Prostate gland (tissue), 2 donors: ENCODE measurements at regions of chr13 and their contacts with region 1.

Region 1: GRCh38 chr13:46492946-46493345 is 60.0 kb upstream of the LRCH1 start:
- DNase-seq: peak; percentile 46
- H3K4me3 ChIP-seq: no peak overlapping the region
- H3K27ac ChIP-seq: no peak overlapping the region
- H3K4me1 ChIP-seq: no peaks in the 10 kb centered on the region
- H3K27me3 ChIP-seq: no peaks in the 10 kb centered on the region
- CTCF ChIP-seq: peak in 3 of 4 experiments; percentile 58 to 74 (median 73)
- POLR2A ChIP-seq: no peak

Region 2: GRCh38 chr13:45492538-45492937 is 1000.4 kb before region 1 on chr13:
- intact Hi-C with region 1: no loop called
- DNase-seq: no peak
- H3K4me3 ChIP-seq: no peak overlapping the region
- H3K27ac ChIP-seq: no peak overlapping the region
- H3K4me1 ChIP-seq: no peaks in the 10 kb centered on the region
- H3K27me3 ChIP-seq: no peaks in the 10 kb centered on the region
- CTCF ChIP-seq: no peak
- POLR2A ChIP-seq: no peak

Region 3: GRCh38 chr13:46668302-46668720 is 175.4 kb after region 1 on chr13:
- intact Hi-C with region 1: no loop called
- DNase-seq: no peak
- H3K4me3 ChIP-seq: no peak overlapping the region
- H3K27ac ChIP-seq: no peak overlapping the region
- H3K4me1 ChIP-seq: peaks cover 4% of the 10 kb centered on the region
- H3K27me3 ChIP-seq: no peaks in the 10 kb centered on the region
- CTCF ChIP-seq: no peak
- POLR2A ChIP-seq: no peak

Region 4: DNA sequence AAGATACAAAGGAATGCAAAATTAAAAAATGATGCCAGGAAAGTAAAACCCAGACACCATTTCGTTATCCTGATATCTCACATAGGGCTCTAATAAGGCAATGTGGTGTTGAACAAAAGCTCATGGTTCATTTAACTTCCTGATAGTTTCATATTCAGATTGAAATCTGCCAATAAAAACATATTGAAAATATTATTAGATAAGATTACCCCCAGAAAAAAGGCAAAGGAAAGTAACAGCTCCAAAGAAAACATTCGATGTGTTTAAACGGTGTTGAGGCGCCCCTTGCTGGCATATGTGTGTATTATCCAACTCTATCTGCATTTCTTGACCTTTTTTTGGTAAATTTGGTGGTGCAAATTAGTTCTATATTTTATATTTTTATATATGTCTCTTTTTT is 228.1 kb after region 1 on chr13:
- intact Hi-C with region 1: loop called (anchors 5 kb)
- DNase-seq: peak; percentile 42
- H3K4me3 ChIP-seq: no peak overlapping the region
- H3K27ac ChIP-seq: no peak overlapping the region
- H3K4me1 ChIP-seq: no peaks in the 10 kb centered on the region
- H3K27me3 ChIP-seq: no peaks in the 10 kb centered on the region
- CTCF ChIP-seq: peak; percentile 41 to 86 (median 66)
- POLR2A ChIP-seq: no peak

Region 5: DNA sequence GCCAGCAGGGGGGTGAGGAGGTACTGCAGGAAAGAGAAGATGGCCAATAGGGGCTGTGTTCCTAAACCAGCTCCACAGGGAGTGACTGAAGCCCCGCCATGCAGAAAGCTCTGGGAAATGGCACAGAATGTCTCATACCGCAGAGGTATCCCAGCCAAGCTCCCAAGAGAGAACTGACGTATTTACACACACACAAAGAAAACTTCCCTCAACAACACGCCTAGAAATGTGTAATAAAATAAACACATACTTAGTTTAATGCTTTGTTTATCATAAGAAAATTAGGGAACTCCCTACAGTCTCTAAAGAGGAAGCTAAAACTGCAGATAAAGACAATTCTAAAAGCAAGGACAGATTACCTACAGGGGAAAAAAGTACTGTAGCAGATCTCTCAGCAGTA is 264.0 kb after region 1 on chr13:
- intact Hi-C with region 1: no loop called
- DNase-seq: no peak
- H3K4me3 ChIP-seq: no peak overlapping the region
- H3K27ac ChIP-seq: no peak overlapping the region
- H3K4me1 ChIP-seq: peaks cover 4% of the 10 kb centered on the region
- H3K27me3 ChIP-seq: no peaks in the 10 kb centered on the region
- CTCF ChIP-seq: no peak
- POLR2A ChIP-seq: no peak